IMR-90 (cell line): ENCODE measurements at regions of chr17 and their contacts with region 1.

Region 1: GRCh38 chr17:74457146-74457819 is 9.2 kb upstream of the CD300A start:
- DNase-seq: peak; percentile 30
- ATAC-seq: peak; percentile 56; the same call in 1 of the 2 replicates
- H3K4me3 ChIP-seq: no peak overlapping the region
- H3K27ac ChIP-seq: no peak overlapping the region
- H3K4me1 ChIP-seq: no peaks in the 10 kb centered on the region
- H3K27me3 ChIP-seq: no peaks in the 10 kb centered on the region; the same call in 1 of the 2 replicates
- CTCF ChIP-seq: peak; percentile 84
- POLR2A ChIP-seq: no peak
- RAD21 ChIP-seq: peak; percentile 89

Region 2: GRCh38 chr17:74212913-74213791 is 244.1 kb before region 1 on chr17 and contains the start of gene TTYH2:
- CTCF ChIA-PET with region 1: no interaction called
- POLR2A ChIA-PET with region 1: no interaction called
- dilution Hi-C with region 1: no loop called
- in situ Hi-C with region 1: no loop called
- intact Hi-C with region 1: loop called (anchors 1 kb)
- DNase-seq: peak; percentile 82
- ATAC-seq: peak; percentile 89
- H3K4me3 ChIP-seq: peak within 1 kb of the TSS; percentile 67
- H3K27ac ChIP-seq: peak within 1 kb of the TSS; percentile 22
- H3K4me1 ChIP-seq: peaks cover 13% of the 10 kb centered on the region
- H3K27me3 ChIP-seq: no peaks in the 10 kb centered on the region; the same call in 1 of the 2 replicates
- CTCF ChIP-seq: peak; percentile 27
- POLR2A ChIP-seq: no peak; the same call in 1 of the 2 replicates
- RAD21 ChIP-seq: 0 out of 2 replicates have a peak, but pooled peaks have one; percentile 17
- total RNA-seq, gene TTYH2: 2.3 and 4.2 TPM in 2 replicates

Region 3: GRCh38 chr17:74379495-74380085 is 77.7 kb before region 1 on chr17:
- CTCF ChIA-PET with region 1: interaction called, 4 read pairs
- POLR2A ChIA-PET with region 1: no interaction called
- dilution Hi-C with region 1: no loop called
- in situ Hi-C with region 1: no loop called
- intact Hi-C with region 1: loop called (anchors 1 kb)
- DNase-seq: peak; percentile 47
- ATAC-seq: peak; percentile 88
- H3K4me3 ChIP-seq: no peak overlapping the region
- H3K27ac ChIP-seq: no peak overlapping the region
- H3K4me1 ChIP-seq: no peaks in the 10 kb centered on the region
- H3K27me3 ChIP-seq: no peaks in the 10 kb centered on the region; the same call in 1 of the 2 replicates
- CTCF ChIP-seq: peak; percentile 72
- POLR2A ChIP-seq: no peak
- RAD21 ChIP-seq: peak; percentile 76